Head of caudate nucleus (tissue), 42 donors: ENCODE measurements at regions of chr1 and their contacts with region 1.

Region 1: GRCh38 chr1:226121587-226122400 is 59.3 kb downstream of the H3-3A start:
- DNase-seq: peak in 40 of 42 donors; percentile 23 to 85 (median 68)

Region 2: DNA sequence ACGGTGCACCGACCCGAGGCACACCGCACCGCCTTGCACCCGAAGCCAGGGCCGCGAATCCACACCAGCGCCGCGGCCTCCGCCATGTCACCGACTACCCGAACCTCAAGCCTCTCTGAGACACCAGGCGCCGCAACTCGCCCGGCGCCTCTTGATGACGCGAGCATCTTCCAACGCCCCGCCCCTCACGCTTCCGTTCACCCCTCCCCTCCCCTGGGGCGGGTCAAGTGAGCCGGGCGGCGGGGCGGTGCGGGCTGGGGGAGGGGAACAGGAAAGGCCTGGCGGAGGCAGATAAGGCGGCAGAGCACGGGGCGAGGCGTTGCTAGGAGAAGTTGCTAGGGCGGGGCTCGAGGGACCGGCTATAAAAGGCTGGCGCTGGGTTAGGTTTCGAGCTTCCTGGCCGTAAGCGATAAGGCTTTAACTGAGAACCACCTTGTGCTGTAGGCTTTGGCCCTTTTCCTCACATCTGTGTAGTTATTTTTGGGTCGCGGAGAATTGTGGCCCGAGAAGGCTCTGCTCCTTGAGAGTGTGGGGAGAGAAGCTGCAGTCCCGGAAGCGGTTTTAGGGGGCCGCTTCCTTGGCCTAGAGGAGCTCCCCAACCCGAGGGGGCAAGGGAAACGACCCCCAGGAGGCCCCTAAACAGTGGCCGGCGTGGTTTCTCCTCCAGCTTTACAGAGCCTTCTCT is 122.4 kb before region 1 on chr1 and contains the start of gene SDE2:
- intact Hi-C with region 1: loop called (anchors 5 kb)
- DNase-seq: peak; percentile 97 to 100 (median 100)

Region 3: GRCh38 chr1:226062558-226063223 is 59.1 kb before region 1 on chr1 and contains the start of gene H3-3A:
- intact Hi-C with region 1: loop called (anchors 5 kb)
- DNase-seq: peak; percentile 94 to 99 (median 97)

Region 4: GRCh38 chr1:226186124-226187018 is 64.6 kb after region 1 on chr1 and contains the start of gene ACBD3:
- intact Hi-C with region 1: loop called (anchors 10 kb)
- DNase-seq: peak; percentile 81 to 97 (median 91)

Region 5: GRCh38 chr1:226332947-226333346 is 211.2 kb after region 1 on chr1:
- intact Hi-C with region 1: loop called (anchors 10 kb)
- DNase-seq: no peak